Heart left ventricle (tissue), 16 donors: ENCODE measurements at regions of chr2 and their contacts with region 1.

Region 1: GRCh38 chr2:222805541-222806304 is 55.1 kb upstream of the ACSL3 start:
- DNase-seq: peak in 2 of 5 donors; percentile 34 to 38
- ATAC-seq: peak; percentile 94 to 98 (median 95)
- H3K4me3 ChIP-seq: no peak overlapping the region
- H3K27ac ChIP-seq: peak overlapping the region in 3 of 12 donors; percentile 2 to 76 (median 8)
- H3K4me1 ChIP-seq: peaks cover 0 to 20% (median 0%) of the 10 kb centered on the region in 12 donors
- H3K27me3 ChIP-seq: no peaks in the 10 kb centered on the region
- CTCF ChIP-seq: no peak
- POLR2A ChIP-seq: no peak

Region 2: GRCh38 chr2:222854773-222855700 is 49.3 kb after region 1 on chr2:
- intact Hi-C with region 1: loop called in 2 of 10 experiments (anchors 5 kb)
- DNase-seq: no peak
- ATAC-seq: peak in 1 of 4 donors; percentile 42
- H3K4me3 ChIP-seq: no peak overlapping the region
- H3K27ac ChIP-seq: no peak overlapping the region
- H3K4me1 ChIP-seq: peaks cover 0 to 10% (median 7%) of the 10 kb centered on the region in 12 donors
- H3K27me3 ChIP-seq: no peaks in the 10 kb centered on the region
- CTCF ChIP-seq: no peak
- POLR2A ChIP-seq: no peak

Region 3: GRCh38 chr2:222878301-222878876 is 72.7 kb after region 1 on chr2:
- intact Hi-C with region 1: no loop called
- DNase-seq: no peak
- ATAC-seq: no peak
- H3K4me3 ChIP-seq: no peak overlapping the region
- H3K27ac ChIP-seq: no peak overlapping the region
- H3K4me1 ChIP-seq: peaks cover 2 to 63% (median 30%) of the 10 kb centered on the region in 12 donors
- H3K27me3 ChIP-seq: no peaks in the 10 kb centered on the region
- CTCF ChIP-seq: no peak
- POLR2A ChIP-seq: no peak